CD8-positive, alpha-beta T cell (primary cell): ENCODE measurements at regions of chr1 and their contacts with region 1.

Region 1: GRCh38 chr1:65577278-65577677 is 156.8 kb downstream of the LEPR start:
- DNase-seq: no peak
- ATAC-seq: no peak
- H3K4me3 ChIP-seq: no peak overlapping the region
- H3K4me3 Mint-ChIP-seq: no peak overlapping the region
- H3K27ac ChIP-seq: no peak overlapping the region
- H3K27ac Mint-ChIP-seq: no peak overlapping the region
- H3K4me1 ChIP-seq: no peaks in the 10 kb centered on the region
- H3K4me1 Mint-ChIP-seq: no peaks in the 10 kb centered on the region
- H3K27me3 ChIP-seq: no peaks in the 10 kb centered on the region
- H3K27me3 Mint-ChIP-seq: no peaks in the 10 kb centered on the region
- CTCF ChIP-seq: no peak

Region 2: DNA sequence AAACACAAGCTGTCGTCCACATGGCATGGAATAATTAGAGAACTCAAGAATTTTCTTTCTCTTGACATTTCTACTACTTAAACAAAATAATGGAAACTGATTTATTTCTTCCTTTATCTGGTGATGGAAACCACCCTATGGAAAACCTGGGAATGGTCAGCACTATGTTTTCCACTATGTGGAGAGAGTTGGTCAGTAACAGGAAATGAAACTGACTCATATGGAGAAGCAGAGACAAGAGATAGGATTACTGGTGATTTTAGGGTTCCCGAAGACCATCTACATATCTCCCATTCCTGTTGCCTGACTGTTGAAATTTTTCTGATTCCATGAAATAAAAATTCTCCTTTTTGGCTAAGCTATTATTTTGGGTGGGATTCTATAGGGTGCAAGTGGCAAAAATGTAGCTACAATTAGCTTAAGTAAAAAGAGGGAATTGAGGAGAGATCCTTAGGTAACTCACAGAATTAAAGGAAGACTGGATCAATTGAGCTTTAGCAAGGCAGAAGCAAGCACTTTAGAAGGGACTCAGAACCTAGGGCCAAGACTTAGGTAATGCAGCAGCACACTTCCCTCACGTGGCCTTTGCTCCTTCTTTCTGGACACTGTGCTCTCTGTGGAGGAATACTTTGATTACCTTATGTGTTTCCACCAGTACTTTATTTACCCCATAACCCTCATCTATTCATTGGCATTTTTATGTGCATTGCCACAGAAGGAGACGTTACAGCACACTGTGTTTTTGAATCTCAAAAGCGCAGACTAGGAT is 67.2 kb before region 1 on chr1:
- CTCF ChIA-PET with region 1: no interaction called
- POLR2A ChIA-PET with region 1: no interaction called
- intact Hi-C with region 1: no loop called
- DNase-seq: no peak
- ATAC-seq: no peak
- H3K4me3 ChIP-seq: no peak overlapping the region
- H3K4me3 Mint-ChIP-seq: no peak overlapping the region
- H3K27ac ChIP-seq: no peak overlapping the region
- H3K27ac Mint-ChIP-seq: no peak overlapping the region
- H3K4me1 ChIP-seq: no peaks in the 10 kb centered on the region
- H3K4me1 Mint-ChIP-seq: no peaks in the 10 kb centered on the region
- H3K27me3 ChIP-seq: no peaks in the 10 kb centered on the region
- H3K27me3 Mint-ChIP-seq: no peaks in the 10 kb centered on the region
- CTCF ChIP-seq: no peak

Region 3: DNA sequence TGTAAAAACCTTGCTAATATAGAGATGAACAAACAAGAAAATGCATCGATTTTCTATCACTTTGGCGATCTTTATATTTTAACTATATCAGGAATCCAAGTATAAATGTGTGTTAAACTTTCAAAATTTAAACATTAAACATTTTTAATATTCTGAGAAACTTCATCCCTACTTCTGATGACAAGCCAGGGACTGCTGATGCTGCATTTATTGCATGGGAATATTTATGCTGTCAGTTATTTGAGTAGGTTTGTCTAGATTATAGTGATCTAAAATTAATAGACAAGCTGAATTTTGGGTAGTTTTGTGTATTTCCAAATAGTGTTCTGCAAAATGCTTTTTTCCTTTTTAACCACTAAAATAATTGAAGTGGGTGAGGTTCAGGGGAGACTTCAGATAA is 18.4 kb after region 1 on chr1:
- CTCF ChIA-PET with region 1: no interaction called
- POLR2A ChIA-PET with region 1: no interaction called
- intact Hi-C with region 1: loop called in 1 of 2 experiments (anchors 2 kb)
- DNase-seq: no peak
- ATAC-seq: no peak
- H3K4me3 ChIP-seq: no peak overlapping the region
- H3K4me3 Mint-ChIP-seq: no peak overlapping the region
- H3K27ac ChIP-seq: no peak overlapping the region
- H3K27ac Mint-ChIP-seq: no peak overlapping the region
- H3K4me1 ChIP-seq: no peaks in the 10 kb centered on the region
- H3K4me1 Mint-ChIP-seq: no peaks in the 10 kb centered on the region
- H3K27me3 ChIP-seq: no peaks in the 10 kb centered on the region
- H3K27me3 Mint-ChIP-seq: no peaks in the 10 kb centered on the region
- CTCF ChIP-seq: no peak

Region 4: DNA sequence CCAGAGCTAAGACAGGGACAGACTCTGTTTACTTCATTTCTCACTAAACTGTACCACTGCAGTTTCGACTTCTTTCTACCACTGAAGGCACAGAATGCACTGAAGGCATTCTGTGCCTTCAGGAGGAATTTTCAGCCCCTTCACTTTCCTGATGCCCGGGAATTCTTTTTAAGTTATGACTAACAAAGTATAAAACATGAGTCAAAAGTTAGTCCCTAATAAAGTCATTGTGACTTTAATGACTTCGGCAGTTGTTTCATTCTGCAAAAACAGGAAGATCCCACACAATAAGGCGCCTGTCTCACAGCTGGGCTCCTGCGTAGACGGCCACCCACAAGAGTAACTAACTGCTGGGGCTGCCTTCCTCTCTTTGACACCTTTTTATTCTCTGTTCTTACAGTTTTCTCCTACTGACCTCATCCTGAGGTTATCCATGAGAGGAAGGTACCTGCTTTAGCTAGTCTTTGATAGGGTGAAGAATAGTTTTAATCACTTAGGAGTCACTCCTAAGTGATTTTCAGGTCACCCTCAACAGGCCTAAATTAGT is 772.8 kb after region 1 on chr1:
- CTCF ChIA-PET with region 1: no interaction called
- POLR2A ChIA-PET with region 1: no interaction called
- intact Hi-C with region 1: no loop called
- DNase-seq: peak in 7 of 9 experiments; percentile 30 to 90 (median 68)
- ATAC-seq: peak; percentile 80
- H3K4me3 ChIP-seq: peak overlapping the region in 1 of 2 experiments; percentile 16
- H3K4me3 Mint-ChIP-seq: peak overlapping the region; percentile 72
- H3K27ac ChIP-seq: peak overlapping the region; percentile 33 to 68
- H3K27ac Mint-ChIP-seq: peak overlapping the region; percentile 95
- H3K4me1 ChIP-seq: peaks cover 81% of the 10 kb centered on the region
- H3K4me1 Mint-ChIP-seq: peaks cover 96% of the 10 kb centered on the region
- H3K27me3 ChIP-seq: no peaks in the 10 kb centered on the region
- H3K27me3 Mint-ChIP-seq: no peaks in the 10 kb centered on the region
- CTCF ChIP-seq: no peak